CD8-positive, alpha-beta memory T cell (primary cell): ENCODE measurements at regions of chr11 and their contacts with region 1.

Region 1: GRCh38 chr11:67353317-67354074 is at the start of gene POLD4:
- DNase-seq: peak; percentile 92 to 97 (median 96)
- H3K4me3 ChIP-seq: peak within 1 kb of the TSS; percentile 96
- H3K4me3 Mint-ChIP-seq: peak within 1 kb of the TSS; percentile 92 to 98 (median 95)
- H3K27ac ChIP-seq: peak within 1 kb of the TSS; percentile 96
- H3K27ac Mint-ChIP-seq: peak within 1 kb of the TSS; percentile 97 to 99 (median 98)
- H3K4me1 ChIP-seq: peaks cover 50% of the 10 kb centered on the region
- H3K4me1 Mint-ChIP-seq: peaks cover 35 to 69% (median 55%) of the 10 kb centered on the region in 3 donors
- H3K27me3 ChIP-seq: no peaks in the 10 kb centered on the region
- H3K27me3 Mint-ChIP-seq: no peaks in the 10 kb centered on the region
- total RNA-seq, gene POLD4: 32.3 to 37.8 TPM

Region 2: GRCh38 chr11:66920978-66921784 is 432.3 kb before region 1 on chr11:
- CTCF ChIA-PET with region 1: no interaction called
- POLR2A ChIA-PET with region 1: no interaction called
- DNase-seq: no peak
- H3K4me3 ChIP-seq: no peak overlapping the region
- H3K4me3 Mint-ChIP-seq: no peak overlapping the region
- H3K27ac ChIP-seq: peak overlapping the region; percentile 39
- H3K27ac Mint-ChIP-seq: no peak overlapping the region
- H3K4me1 ChIP-seq: no peaks in the 10 kb centered on the region
- H3K4me1 Mint-ChIP-seq: no peaks in the 10 kb centered on the region
- H3K27me3 ChIP-seq: no peaks in the 10 kb centered on the region
- H3K27me3 Mint-ChIP-seq: peaks cover 0 to 2% of the 10 kb centered on the region in 2 donors

Region 3: GRCh38 chr11:67178421-67178820 is 175.1 kb before region 1 on chr11:
- CTCF ChIA-PET with region 1: no interaction called
- POLR2A ChIA-PET with region 1: no interaction called
- DNase-seq: no peak
- H3K4me3 ChIP-seq: no peak overlapping the region
- H3K4me3 Mint-ChIP-seq: no peak overlapping the region
- H3K27ac ChIP-seq: no peak overlapping the region
- H3K27ac Mint-ChIP-seq: peak overlapping the region in 3 of 8 donors; percentile 8 to 82 (median 43)
- H3K4me1 ChIP-seq: peaks cover 3% of the 10 kb centered on the region
- H3K4me1 Mint-ChIP-seq: peaks cover 24 to 50% (median 50%) of the 10 kb centered on the region in 3 donors
- H3K27me3 ChIP-seq: no peaks in the 10 kb centered on the region
- H3K27me3 Mint-ChIP-seq: no peaks in the 10 kb centered on the region

Region 4: DNA sequence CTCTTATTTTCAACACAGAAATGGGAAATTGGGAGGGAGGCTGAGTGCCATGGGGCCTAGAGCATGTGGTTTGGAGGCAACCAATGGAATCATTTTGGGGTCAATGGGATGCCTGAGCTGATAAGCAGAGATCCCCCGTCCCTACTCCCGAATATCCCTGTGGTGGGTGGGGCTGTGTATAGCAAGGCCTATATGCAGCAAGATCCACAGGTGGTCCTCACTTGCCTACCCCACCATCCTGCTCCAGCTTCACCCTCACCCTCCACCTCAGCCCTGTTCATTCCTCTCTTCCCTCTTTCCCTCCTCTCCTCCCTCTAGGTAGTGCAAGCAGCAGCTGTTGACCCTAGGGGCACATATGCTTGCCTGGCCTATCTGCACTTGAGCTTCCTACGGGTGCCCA is 30.8 kb before region 1 on chr11:
- CTCF ChIA-PET with region 1: interaction called, 12 read pairs
- POLR2A ChIA-PET with region 1: interaction called, 6 read pairs
- DNase-seq: no peak
- H3K4me3 ChIP-seq: no peak overlapping the region
- H3K4me3 Mint-ChIP-seq: peak overlapping the region in 1 of 7 donors; percentile 70
- H3K27ac ChIP-seq: no peak overlapping the region
- H3K27ac Mint-ChIP-seq: peak overlapping the region in 2 of 8 donors; percentile 34 to 57
- H3K4me1 ChIP-seq: peaks cover 6% of the 10 kb centered on the region
- H3K4me1 Mint-ChIP-seq: peaks cover 6 to 12% (median 7%) of the 10 kb centered on the region in 3 donors
- H3K27me3 ChIP-seq: no peaks in the 10 kb centered on the region
- H3K27me3 Mint-ChIP-seq: peaks cover 0 to 4% of the 10 kb centered on the region in 2 donors

Region 5: GRCh38 chr11:67366961-67367760 is 13.7 kb after region 1 on chr11:
- CTCF ChIA-PET with region 1: interaction called, 860 read pairs
- POLR2A ChIA-PET with region 1: interaction called, 15 read pairs
- DNase-seq: no peak
- H3K4me3 ChIP-seq: no peak overlapping the region
- H3K4me3 Mint-ChIP-seq: no peak overlapping the region
- H3K27ac ChIP-seq: no peak overlapping the region
- H3K27ac Mint-ChIP-seq: peak overlapping the region in 4 of 8 donors; percentile 44 to 80 (median 74)
- H3K4me1 ChIP-seq: peaks cover 58% of the 10 kb centered on the region
- H3K4me1 Mint-ChIP-seq: peaks cover 75 to 92% (median 84%) of the 10 kb centered on the region in 3 donors
- H3K27me3 ChIP-seq: no peaks in the 10 kb centered on the region
- H3K27me3 Mint-ChIP-seq: peaks cover 0 to 3% of the 10 kb centered on the region in 2 donors

Region 6: GRCh38 chr11:67373925-67374618 is 20.6 kb after region 1 on chr11:
- CTCF ChIA-PET with region 1: interaction called, 860 read pairs
- POLR2A ChIA-PET with region 1: interaction called, 51 read pairs
- DNase-seq: peak; percentile 39 to 71 (median 46)
- H3K4me3 ChIP-seq: peak overlapping the region; percentile 53
- H3K4me3 Mint-ChIP-seq: peak overlapping the region; percentile 78 to 98 (median 85)
- H3K27ac ChIP-seq: peak overlapping the region; percentile 79
- H3K27ac Mint-ChIP-seq: peak overlapping the region; percentile 74 to 98 (median 88)
- H3K4me1 ChIP-seq: peaks cover 48% of the 10 kb centered on the region
- H3K4me1 Mint-ChIP-seq: peaks cover 39 to 68% (median 45%) of the 10 kb centered on the region in 3 donors
- H3K27me3 ChIP-seq: peaks cover 3% of the 10 kb centered on the region
- H3K27me3 Mint-ChIP-seq: peaks cover 0 to 5% of the 10 kb centered on the region in 2 donors

Region 7: DNA sequence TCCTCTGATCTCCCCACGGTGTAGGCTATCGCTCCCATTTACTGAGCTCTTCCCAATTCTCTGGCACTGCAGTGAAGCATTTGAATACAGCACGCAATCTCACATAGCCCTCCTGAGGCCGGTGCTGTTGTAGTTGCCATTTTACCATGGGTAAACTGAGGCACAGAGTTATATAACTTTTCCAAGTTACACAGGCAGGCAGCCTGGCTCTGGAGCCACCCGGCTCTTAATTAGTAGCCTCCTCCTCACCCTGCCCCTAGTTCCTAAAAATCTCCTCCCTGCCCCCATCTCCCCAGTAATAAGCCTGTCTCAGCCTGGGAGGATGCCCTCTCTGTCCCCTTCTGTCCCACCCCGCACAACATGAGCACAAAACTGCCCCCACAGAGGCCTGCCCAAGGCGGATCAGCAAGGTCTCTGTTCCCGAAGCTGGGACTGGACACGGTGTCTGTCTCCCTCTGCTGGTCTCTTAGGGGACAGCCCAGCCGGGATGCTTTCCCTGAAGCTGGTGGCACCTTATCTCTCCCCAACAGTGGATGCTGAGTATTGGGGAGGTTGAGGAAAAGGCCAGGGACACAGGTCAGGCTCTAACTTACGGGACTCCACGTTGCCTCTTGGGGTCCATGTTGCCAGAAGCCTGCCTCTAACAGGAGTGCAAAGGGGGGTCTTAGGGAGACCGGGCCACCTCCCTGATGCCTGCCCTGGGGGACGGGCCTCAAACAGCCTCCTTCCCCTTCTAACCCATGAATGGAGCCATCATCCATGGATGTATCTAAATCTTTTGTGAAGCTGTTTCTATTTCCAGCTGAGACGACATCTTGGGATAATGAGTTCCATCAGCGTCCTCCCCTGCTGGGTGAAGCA is 29.0 kb after region 1 on chr11:
- CTCF ChIA-PET with region 1: interaction called, 860 read pairs
- POLR2A ChIA-PET with region 1: interaction called, 46 read pairs
- DNase-seq: peak; percentile 76 to 88 (median 77)
- H3K4me3 ChIP-seq: no peak overlapping the region
- H3K4me3 Mint-ChIP-seq: no peak overlapping the region
- H3K27ac ChIP-seq: no peak overlapping the region
- H3K27ac Mint-ChIP-seq: peak overlapping the region in 6 of 8 donors; percentile 2 to 80 (median 72)
- H3K4me1 ChIP-seq: peaks cover 8% of the 10 kb centered on the region
- H3K4me1 Mint-ChIP-seq: peaks cover 5 to 16% (median 11%) of the 10 kb centered on the region in 3 donors
- H3K27me3 ChIP-seq: peaks cover 5% of the 10 kb centered on the region
- H3K27me3 Mint-ChIP-seq: peaks cover 0 to 3% of the 10 kb centered on the region in 2 donors

Region 8: DNA sequence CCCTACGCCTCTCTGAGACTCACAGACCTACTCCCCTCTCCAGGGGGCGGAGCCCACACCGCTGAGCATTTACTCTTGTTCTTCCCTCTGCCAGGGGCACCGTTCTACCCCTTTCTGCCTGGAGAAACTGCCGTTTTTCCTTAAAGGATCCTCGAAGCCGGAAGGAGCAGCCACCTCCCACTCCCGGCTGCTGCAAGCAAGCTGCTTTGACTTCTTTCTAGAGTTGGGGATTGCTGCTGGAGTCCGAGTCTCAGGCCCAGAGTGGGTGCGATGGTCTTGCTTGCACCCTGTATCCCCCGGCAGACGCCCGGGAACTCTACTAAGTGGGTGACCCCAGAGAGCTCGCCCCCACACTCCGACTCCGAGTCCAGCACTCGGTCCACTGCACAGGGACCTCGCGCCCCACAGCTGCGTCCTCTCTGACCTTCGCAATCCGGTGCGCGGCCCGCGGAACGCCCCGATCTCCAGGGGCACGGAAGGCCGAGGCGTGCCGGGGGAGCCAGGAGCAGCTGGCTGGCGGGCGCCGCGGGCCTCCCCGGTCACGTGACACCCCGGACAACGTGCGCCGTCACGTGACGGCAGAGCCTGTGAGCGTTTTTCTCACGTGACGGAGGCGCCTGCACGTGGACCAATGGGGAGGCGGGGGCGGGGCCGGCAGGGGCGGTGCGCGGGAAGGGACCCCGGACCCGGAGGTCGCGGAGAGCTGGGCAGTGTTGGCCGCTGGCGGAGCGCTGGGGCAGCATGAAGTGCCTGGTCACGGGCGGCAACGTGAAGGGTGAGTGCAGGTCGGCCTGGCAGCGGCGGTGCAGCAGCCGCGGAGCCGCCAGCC is 38.0 kb after region 1 on chr11 and contains the start of gene RAD9A:
- CTCF ChIA-PET with region 1: interaction called, 860 read pairs
- POLR2A ChIA-PET with region 1: interaction called, 25 read pairs
- DNase-seq: peak; percentile 88 to 96 (median 94)
- H3K4me3 ChIP-seq: peak within 1 kb of the TSS; percentile 96
- H3K4me3 Mint-ChIP-seq: peak within 1 kb of the TSS; percentile 86 to 94 (median 87)
- H3K27ac ChIP-seq: peak within 1 kb of the TSS; percentile 83
- H3K27ac Mint-ChIP-seq: peak within 1 kb of the TSS; percentile 80 to 96 (median 88)
- H3K4me1 ChIP-seq: peaks cover 25% of the 10 kb centered on the region
- H3K4me1 Mint-ChIP-seq: peaks cover 30 to 48% (median 36%) of the 10 kb centered on the region in 3 donors
- H3K27me3 ChIP-seq: no peaks in the 10 kb centered on the region
- H3K27me3 Mint-ChIP-seq: no peaks in the 10 kb centered on the region
- total RNA-seq, gene RAD9A: 36.8 to 38.8 TPM

Region 9: GRCh38 chr11:67534070-67534679 is 180.7 kb after region 1 on chr11:
- CTCF ChIA-PET with region 1: no interaction called
- POLR2A ChIA-PET with region 1: no interaction called
- DNase-seq: no peak
- H3K4me3 ChIP-seq: no peak overlapping the region
- H3K4me3 Mint-ChIP-seq: no peak overlapping the region
- H3K27ac ChIP-seq: no peak overlapping the region
- H3K27ac Mint-ChIP-seq: no peak overlapping the region
- H3K4me1 ChIP-seq: no peaks in the 10 kb centered on the region
- H3K4me1 Mint-ChIP-seq: no peaks in the 10 kb centered on the region
- H3K27me3 ChIP-seq: no peaks in the 10 kb centered on the region
- H3K27me3 Mint-ChIP-seq: peaks cover 6 to 9% of the 10 kb centered on the region in 2 donors